ENCODE measurements at regions of chr12 and their contacts with region 1.

Region 1: GRCh38 chr12:70590051-70590450 is 47.2 kb downstream of the PTPRB start:
- DNase-seq: peak; percentile 41
- ATAC-seq: no peak
- H3K4me3 ChIP-seq: no peak overlapping the region
- H3K4me3 Mint-ChIP-seq: no peak overlapping the region
- H3K27ac ChIP-seq: no peak overlapping the region
- H3K27ac Mint-ChIP-seq: no peak overlapping the region
- H3K4me1 ChIP-seq: no peaks in the 10 kb centered on the region
- H3K4me1 Mint-ChIP-seq: no peaks in the 10 kb centered on the region
- H3K27me3 ChIP-seq: no peaks in the 10 kb centered on the region
- H3K27me3 Mint-ChIP-seq: peaks cover 17% of the 10 kb centered on the region
- CTCF ChIP-seq: peak; percentile 76

Region 2: DNA sequence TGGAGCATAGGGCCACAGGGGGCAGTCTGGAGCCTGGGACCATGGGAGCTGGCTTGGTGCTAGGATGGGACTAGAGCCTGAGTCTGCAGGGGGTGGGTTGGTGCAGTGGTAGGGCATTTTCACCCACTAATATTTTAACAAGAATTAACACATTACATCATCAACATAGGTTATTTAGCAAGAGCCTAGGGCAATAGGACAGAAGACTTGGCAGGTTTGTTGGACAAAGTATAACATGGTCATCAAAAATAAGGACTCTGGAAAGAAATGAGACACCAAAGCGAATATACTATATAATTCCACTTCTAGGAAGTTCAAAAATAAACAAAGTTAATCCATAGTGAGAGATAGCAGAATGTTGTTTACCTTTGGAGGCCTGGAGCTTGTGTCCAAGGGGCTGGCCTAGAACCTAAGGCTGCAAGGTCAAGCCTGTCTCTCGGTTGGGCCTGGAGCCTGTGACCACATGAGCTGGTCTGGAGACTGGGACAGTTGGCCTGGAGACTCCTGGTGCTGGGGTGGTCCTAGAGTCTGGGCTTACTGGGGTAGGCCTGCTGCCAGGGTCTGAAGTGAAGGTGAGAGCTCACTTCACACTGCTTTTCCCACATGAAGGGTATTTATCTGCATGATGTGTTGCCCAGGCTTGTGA is 375.0 kb before region 1 on chr12:
- CTCF ChIA-PET with region 1: no interaction called
- POLR2A ChIA-PET with region 1: no interaction called
- intact Hi-C with region 1: no loop called
- DNase-seq: no peak
- ATAC-seq: no peak
- H3K4me3 ChIP-seq: no peak overlapping the region
- H3K4me3 Mint-ChIP-seq: no peak overlapping the region
- H3K27ac ChIP-seq: no peak overlapping the region
- H3K27ac Mint-ChIP-seq: no peak overlapping the region
- H3K4me1 ChIP-seq: no peaks in the 10 kb centered on the region
- H3K4me1 Mint-ChIP-seq: no peaks in the 10 kb centered on the region
- H3K27me3 ChIP-seq: no peaks in the 10 kb centered on the region
- H3K27me3 Mint-ChIP-seq: no peaks in the 10 kb centered on the region
- CTCF ChIP-seq: no peak

Region 3: GRCh38 chr12:70576346-70577282 is 13.4 kb before region 1 on chr12:
- CTCF ChIA-PET with region 1: interaction called, 11 read pairs
- POLR2A ChIA-PET with region 1: no interaction called
- intact Hi-C with region 1: no loop called
- DNase-seq: peak; percentile 66
- ATAC-seq: peak; percentile 43
- H3K4me3 ChIP-seq: no peak overlapping the region
- H3K4me3 Mint-ChIP-seq: no peak overlapping the region
- H3K27ac ChIP-seq: no peak overlapping the region
- H3K27ac Mint-ChIP-seq: no peak overlapping the region
- H3K4me1 ChIP-seq: no peaks in the 10 kb centered on the region
- H3K4me1 Mint-ChIP-seq: no peaks in the 10 kb centered on the region
- H3K27me3 ChIP-seq: peaks cover 0 to 2% (median 0%) of the 10 kb centered on the region in 4 experiments
- H3K27me3 Mint-ChIP-seq: peaks cover 4% of the 10 kb centered on the region
- CTCF ChIP-seq: peak; percentile 78

Region 4: GRCh38 chr12:70609711-70610491 is 19.9 kb after region 1 on chr12:
- CTCF ChIA-PET with region 1: no interaction called
- POLR2A ChIA-PET with region 1: no interaction called
- intact Hi-C with region 1: no loop called
- DNase-seq: peak; percentile 3
- ATAC-seq: no peak
- H3K4me3 ChIP-seq: peak overlapping the region in 1 of 5 experiments; percentile 33
- H3K4me3 Mint-ChIP-seq: peak overlapping the region; percentile 46
- H3K27ac ChIP-seq: no peak overlapping the region
- H3K27ac Mint-ChIP-seq: no peak overlapping the region
- H3K4me1 ChIP-seq: peaks cover 5 to 9% of the 10 kb centered on the region in 2 donors
- H3K4me1 Mint-ChIP-seq: peaks cover 10% of the 10 kb centered on the region
- H3K27me3 ChIP-seq: peaks cover 0 to 10% (median 6%) of the 10 kb centered on the region in 4 experiments
- H3K27me3 Mint-ChIP-seq: peaks cover 52% of the 10 kb centered on the region
- CTCF ChIP-seq: no peak